BJ (cell line): ENCODE measurements at regions of chr6 and their contacts with region 1.

Region 1: GRCh38 chr6:145721144-145721543 is 14.2 kb downstream of the EPM2A start:
- DNase-seq: no peak
- H3K4me3 ChIP-seq: no peak overlapping the region
- H3K27me3 ChIP-seq: no peaks in the 10 kb centered on the region
- CTCF ChIP-seq: no peak

Region 2: GRCh38 chr6:144497650-144498049 is 1223.5 kb before region 1 on chr6:
- CTCF ChIA-PET with region 1: no interaction called
- POLR2A ChIA-PET with region 1: interaction called, 13 read pairs
- DNase-seq: no peak
- H3K4me3 ChIP-seq: no peak overlapping the region
- H3K27me3 ChIP-seq: no peaks in the 10 kb centered on the region
- CTCF ChIP-seq: no peak

Region 3: DNA sequence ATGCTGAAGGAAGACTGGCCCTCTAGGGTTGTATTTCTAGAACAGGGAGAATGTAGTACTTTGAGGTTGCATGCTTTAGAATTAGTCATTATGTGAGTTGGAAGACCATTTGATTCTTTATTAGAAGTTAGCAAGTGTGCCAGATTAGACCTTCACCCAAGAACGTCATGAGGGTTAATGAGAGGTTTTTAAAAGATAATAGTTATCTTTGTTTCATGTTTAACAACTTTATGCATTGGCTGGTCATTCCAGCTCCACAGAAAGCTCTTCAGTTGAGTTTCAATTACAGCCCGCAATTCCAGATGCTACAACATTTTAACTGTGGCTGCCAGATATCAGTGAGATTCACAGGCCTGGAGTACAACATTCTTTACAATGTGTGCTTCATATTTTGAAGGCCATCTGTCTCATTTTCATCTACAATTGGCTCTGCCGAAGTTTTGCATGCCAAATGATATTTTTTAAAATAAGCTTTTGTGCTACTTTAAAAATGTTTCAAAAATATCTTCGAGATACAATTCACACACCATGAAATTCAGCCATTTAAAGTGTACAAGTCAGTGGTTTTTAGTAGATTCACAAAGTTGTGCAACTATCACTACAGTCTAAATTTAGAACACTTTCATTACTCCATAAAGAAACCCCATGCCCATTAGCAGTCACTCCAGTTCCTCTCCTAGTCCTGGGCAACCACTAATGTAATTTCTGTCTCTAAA is 154.5 kb after region 1 on chr6:
- CTCF ChIA-PET with region 1: no interaction called
- POLR2A ChIA-PET with region 1: no interaction called
- DNase-seq: no peak
- H3K4me3 ChIP-seq: no peak overlapping the region
- H3K27me3 ChIP-seq: no peaks in the 10 kb centered on the region
- CTCF ChIP-seq: no peak